Activated CD8-positive, alpha-beta memory T cell treated with anti-CD3 and anti-CD28 coated beads, Interleukin-2, amount 10 ng/mL, durations not matched to agents 7 days and 5 days (primary cell): ENCODE measurements at regions of chr9 and their contacts with region 1.

Region 1: GRCh38 chr9:35611230-35611797 is 6.3 kb downstream of the TESK1 start:
- DNase-seq: peak; percentile 73
- ATAC-seq: peak; percentile 87
- H3K4me3 Mint-ChIP-seq: no peak overlapping the region
- H3K27ac Mint-ChIP-seq: no peak overlapping the region
- H3K4me1 Mint-ChIP-seq: peaks cover 16% of the 10 kb centered on the region
- H3K27me3 Mint-ChIP-seq: no peaks in the 10 kb centered on the region

Region 2: GRCh38 chr9:35161713-35162604 is 449.4 kb before region 1 on chr9 and contains the start of gene UNC13B:
- CTCF ChIA-PET with region 1: no interaction called
- DNase-seq: peak; percentile 78
- ATAC-seq: peak; percentile 87
- H3K4me3 Mint-ChIP-seq: peak within 1 kb of the TSS; percentile 79
- H3K27ac Mint-ChIP-seq: no peak within 1 kb of the TSS
- H3K4me1 Mint-ChIP-seq: peaks cover 30% of the 10 kb centered on the region
- H3K27me3 Mint-ChIP-seq: peaks cover 31% of the 10 kb centered on the region
- total RNA-seq, gene UNC13B: 0.94 to 1.2 TPM

Region 3: GRCh38 chr9:35311891-35312639 is 299.2 kb before region 1 on chr9:
- CTCF ChIA-PET with region 1: no interaction called
- DNase-seq: no peak
- ATAC-seq: no peak
- H3K4me3 Mint-ChIP-seq: no peak overlapping the region
- H3K27ac Mint-ChIP-seq: no peak overlapping the region
- H3K4me1 Mint-ChIP-seq: no peaks in the 10 kb centered on the region
- H3K27me3 Mint-ChIP-seq: peaks cover 16% of the 10 kb centered on the region

Region 4: DNA sequence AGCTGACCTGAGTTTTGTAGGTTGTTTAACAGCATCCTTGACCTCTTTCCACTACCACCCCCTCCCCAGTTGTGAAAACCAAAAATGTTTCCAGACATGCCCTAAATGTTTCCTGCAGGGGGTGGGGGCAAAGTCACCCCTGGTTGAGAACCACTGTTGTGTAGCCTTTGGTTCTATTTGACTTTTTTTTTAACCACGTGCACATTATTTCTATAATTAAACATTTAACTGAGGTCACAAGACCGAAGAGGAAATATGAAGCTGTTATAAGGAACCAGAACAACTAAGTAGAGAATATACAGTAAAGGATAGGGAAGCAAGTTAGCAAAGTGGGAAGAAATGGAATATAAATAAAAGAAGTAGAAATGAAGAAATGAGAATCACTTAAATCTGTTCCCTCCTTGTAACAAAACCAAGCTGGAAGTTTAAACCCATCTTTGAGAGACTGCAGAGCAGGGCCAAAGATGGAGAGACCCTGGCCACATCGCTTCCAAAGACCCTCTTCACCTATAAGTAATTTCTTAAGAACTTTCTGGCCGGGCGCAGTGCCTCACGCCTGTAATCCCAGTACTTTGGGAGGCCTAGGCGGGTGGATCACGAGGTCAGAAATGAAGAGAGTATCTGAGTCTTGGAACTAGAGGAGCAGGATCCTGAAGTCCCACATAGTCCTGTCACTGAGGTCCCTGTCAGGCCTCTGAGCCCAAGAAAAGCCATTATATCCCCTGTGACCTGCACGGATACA is 25.0 kb after region 1 on chr9:
- CTCF ChIA-PET with region 1: interaction called, 13 read pairs
- DNase-seq: no peak
- ATAC-seq: no peak
- H3K4me3 Mint-ChIP-seq: no peak overlapping the region
- H3K27ac Mint-ChIP-seq: no peak overlapping the region
- H3K4me1 Mint-ChIP-seq: peaks cover 48% of the 10 kb centered on the region
- H3K27me3 Mint-ChIP-seq: no peaks in the 10 kb centered on the region

Region 5: DNA sequence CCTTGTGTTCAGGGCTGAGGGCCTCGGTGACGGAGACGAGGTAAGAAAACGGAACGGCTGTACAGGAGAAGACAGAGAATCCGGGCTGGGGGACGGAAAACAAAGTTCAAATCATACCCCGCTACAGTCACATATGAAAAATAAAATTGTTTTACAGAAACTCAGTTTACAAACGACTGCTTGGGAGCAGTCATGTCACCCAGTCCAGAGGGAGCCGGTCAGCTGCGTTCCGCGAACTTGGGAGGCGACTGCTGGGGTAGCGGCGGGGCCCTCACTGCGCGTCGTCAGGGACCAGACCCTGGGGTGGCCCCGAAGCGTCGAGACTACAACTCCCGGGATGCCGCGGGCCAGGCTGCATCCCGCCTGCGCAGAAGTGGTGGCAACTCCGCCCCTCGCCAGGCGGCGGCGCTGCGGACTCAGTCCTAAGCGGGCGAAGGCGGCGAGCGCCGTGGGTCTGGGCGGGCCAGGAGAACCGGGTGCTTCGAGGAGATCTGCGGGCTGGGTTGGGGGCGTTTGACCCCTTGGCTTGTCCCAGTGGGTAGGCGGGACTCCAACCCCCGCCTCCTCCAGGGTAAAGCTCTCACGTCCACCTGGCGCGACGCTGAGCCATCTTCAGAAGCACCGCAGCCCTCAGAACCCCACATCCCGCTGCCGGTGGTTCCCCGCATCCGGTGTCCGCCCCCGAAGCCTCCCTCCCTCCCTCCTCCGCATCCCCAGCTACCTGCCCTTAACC is 35.4 kb after region 1 on chr9:
- CTCF ChIA-PET with region 1: interaction called, 196 read pairs
- DNase-seq: peak; percentile 95
- ATAC-seq: peak; percentile 90
- H3K4me3 Mint-ChIP-seq: peak overlapping the region; percentile 99
- H3K27ac Mint-ChIP-seq: peak overlapping the region; percentile 97
- H3K4me1 Mint-ChIP-seq: peaks cover 47% of the 10 kb centered on the region
- H3K27me3 Mint-ChIP-seq: no peaks in the 10 kb centered on the region

Region 6: DNA sequence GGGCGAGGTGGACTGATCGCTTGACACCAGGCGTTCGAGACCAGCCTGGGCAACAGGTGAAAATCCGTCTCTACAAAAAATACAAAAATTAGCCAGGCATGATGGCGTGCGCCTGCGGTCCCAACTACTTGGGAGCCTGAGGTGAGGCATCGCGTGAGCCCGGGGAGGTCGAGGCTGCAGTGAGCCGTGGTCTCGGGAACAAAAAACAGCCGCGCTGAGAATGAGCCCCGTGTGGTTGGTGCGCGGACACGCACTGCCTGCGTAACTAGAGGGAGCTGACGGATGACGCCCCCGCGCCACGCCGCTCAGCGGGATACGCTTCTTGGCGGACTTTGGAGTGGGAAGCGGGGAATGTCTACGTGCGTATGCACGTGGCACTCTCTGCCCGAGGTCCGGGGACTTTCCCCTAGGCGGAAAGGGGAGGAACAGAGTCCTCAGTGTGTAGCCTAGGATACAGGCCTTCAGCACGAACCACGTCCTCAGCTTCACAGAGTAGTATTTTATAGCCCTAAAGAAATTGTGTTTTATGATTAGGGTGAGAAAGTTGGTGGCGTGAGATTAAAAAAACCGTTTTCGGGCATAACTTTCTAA is 46.3 kb after region 1 on chr9 and contains the start of gene RMRP:
- CTCF ChIA-PET with region 1: interaction called, 96 read pairs
- DNase-seq: peak; percentile 95
- ATAC-seq: peak; percentile 92
- H3K4me3 Mint-ChIP-seq: peak within 1 kb of the TSS; percentile 84
- H3K27ac Mint-ChIP-seq: peak within 1 kb of the TSS; percentile 95
- H3K4me1 Mint-ChIP-seq: peaks cover 61% of the 10 kb centered on the region
- H3K27me3 Mint-ChIP-seq: peaks cover 4% of the 10 kb centered on the region
- total RNA-seq, gene RMRP: 6,751 to 13,083 TPM

Region 7: GRCh38 chr9:35664531-35665470 is 53.5 kb after region 1 on chr9 and contains the start of gene ARHGEF39:
- CTCF ChIA-PET with region 1: interaction called, 96 read pairs
- DNase-seq: peak; percentile 87
- ATAC-seq: peak; percentile 89
- H3K4me3 Mint-ChIP-seq: peak within 1 kb of the TSS; percentile 87
- H3K27ac Mint-ChIP-seq: peak within 1 kb of the TSS; percentile 81
- H3K4me1 Mint-ChIP-seq: peaks cover 61% of the 10 kb centered on the region
- H3K27me3 Mint-ChIP-seq: no peaks in the 10 kb centered on the region
- total RNA-seq, gene ARHGEF39: 14.5 to 21.1 TPM

Region 8: DNA sequence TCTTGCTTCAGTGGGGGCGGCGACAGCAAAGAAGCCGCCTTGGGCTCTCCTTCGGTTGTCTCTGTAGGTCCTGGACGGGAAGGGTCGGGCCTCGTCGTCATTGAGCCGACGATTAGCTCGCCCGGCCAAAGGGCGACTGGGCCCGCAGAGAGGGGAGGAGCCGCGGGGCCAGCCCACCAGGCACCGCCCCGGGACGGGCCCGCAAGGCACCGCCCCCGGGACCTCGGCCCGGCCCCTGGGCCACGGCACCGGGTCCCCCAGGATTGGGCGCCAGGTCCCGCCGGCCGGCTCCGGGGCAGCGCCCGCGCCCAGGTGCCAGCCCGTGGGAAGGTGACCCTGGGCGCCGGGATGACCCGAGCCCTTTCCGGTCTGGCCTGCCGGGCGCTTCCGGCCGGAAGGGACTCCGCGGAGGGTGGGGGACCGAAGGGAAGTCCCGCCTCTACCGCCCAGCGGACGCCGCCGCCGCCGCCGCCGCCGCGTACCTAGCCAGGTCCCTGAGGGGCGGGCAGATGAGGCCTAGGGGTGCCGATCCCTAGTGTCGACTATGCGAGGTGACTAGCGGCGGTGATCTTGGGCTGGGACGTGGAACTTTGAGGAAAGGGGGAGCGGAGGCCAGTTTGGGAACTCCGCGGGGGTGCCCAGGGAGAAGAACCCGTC is 137.7 kb after region 1 on chr9 and contains the starts of genes GBA2 and RGP1:
- CTCF ChIA-PET with region 1: interaction called, 15 read pairs
- DNase-seq: peak; percentile 83
- ATAC-seq: peak; percentile 83
- H3K4me3 Mint-ChIP-seq: peak within 1 kb of the TSS; percentile 88
- H3K27ac Mint-ChIP-seq: peak within 1 kb of the TSS; percentile 86
- H3K4me1 Mint-ChIP-seq: peaks cover 41% of the 10 kb centered on the region
- H3K27me3 Mint-ChIP-seq: no peaks in the 10 kb centered on the region
- total RNA-seq, gene GBA2: 57.7 to 58.8 TPM
- total RNA-seq, gene RGP1: 21.0 to 23.6 TPM